CD14-positive monocyte (primary cell): ENCODE measurements at regions of chr11 and their contacts with region 1.

Region 1: GRCh38 chr11:116787786-116788486 is at the start of gene ZPR1:
- DNase-seq: peak; percentile 76 to 80 (median 79)
- H3K4me3 ChIP-seq: peak within 1 kb of the TSS; percentile 85 to 92 (median 90)
- H3K4me3 Mint-ChIP-seq: peak within 1 kb of the TSS; percentile 94 to 95
- H3K27ac ChIP-seq: peak within 1 kb of the TSS; percentile 61 to 94
- H3K27ac Mint-ChIP-seq: peak within 1 kb of the TSS; percentile 92 to 98 (median 97)
- H3K4me1 ChIP-seq: peaks cover 22 to 26% of the 10 kb centered on the region in 2 donors
- H3K4me1 Mint-ChIP-seq: peaks cover 29% of the 10 kb centered on the region
- H3K27me3 ChIP-seq: no peaks in the 10 kb centered on the region
- H3K27me3 Mint-ChIP-seq: peaks cover 6 to 14% (median 8%) of the 10 kb centered on the region in 3 donors
- CTCF ChIP-seq: no peak
- polyA plus RNA-seq, gene ZPR1: 24.4 to 35.5 (median 35.2) TPM

Region 2: GRCh38 chr11:117232092-117232878 is 444.3 kb after region 1 on chr11 and contains the start of gene RNF214:
- intact Hi-C with region 1: loop called in 1 of 2 experiments (anchors 5 kb)
- DNase-seq: peak; percentile 62 to 74 (median 71)
- H3K4me3 ChIP-seq: peak within 1 kb of the TSS; percentile 96 to 99 (median 97)
- H3K4me3 Mint-ChIP-seq: peak within 1 kb of the TSS; percentile 98 to 100
- H3K27ac ChIP-seq: peak within 1 kb of the TSS; percentile 81 to 89
- H3K27ac Mint-ChIP-seq: peak within 1 kb of the TSS; percentile 93 to 99 (median 98)
- H3K4me1 ChIP-seq: peaks cover 21 to 26% of the 10 kb centered on the region in 2 donors
- H3K4me1 Mint-ChIP-seq: peaks cover 34% of the 10 kb centered on the region
- H3K27me3 ChIP-seq: no peaks in the 10 kb centered on the region
- H3K27me3 Mint-ChIP-seq: peaks cover 0 to 2% (median 0%) of the 10 kb centered on the region in 3 donors
- CTCF ChIP-seq: peak; percentile 99
- polyA plus RNA-seq, gene RNF214: 6.4 to 13.8 (median 7.8) TPM

Region 3: DNA sequence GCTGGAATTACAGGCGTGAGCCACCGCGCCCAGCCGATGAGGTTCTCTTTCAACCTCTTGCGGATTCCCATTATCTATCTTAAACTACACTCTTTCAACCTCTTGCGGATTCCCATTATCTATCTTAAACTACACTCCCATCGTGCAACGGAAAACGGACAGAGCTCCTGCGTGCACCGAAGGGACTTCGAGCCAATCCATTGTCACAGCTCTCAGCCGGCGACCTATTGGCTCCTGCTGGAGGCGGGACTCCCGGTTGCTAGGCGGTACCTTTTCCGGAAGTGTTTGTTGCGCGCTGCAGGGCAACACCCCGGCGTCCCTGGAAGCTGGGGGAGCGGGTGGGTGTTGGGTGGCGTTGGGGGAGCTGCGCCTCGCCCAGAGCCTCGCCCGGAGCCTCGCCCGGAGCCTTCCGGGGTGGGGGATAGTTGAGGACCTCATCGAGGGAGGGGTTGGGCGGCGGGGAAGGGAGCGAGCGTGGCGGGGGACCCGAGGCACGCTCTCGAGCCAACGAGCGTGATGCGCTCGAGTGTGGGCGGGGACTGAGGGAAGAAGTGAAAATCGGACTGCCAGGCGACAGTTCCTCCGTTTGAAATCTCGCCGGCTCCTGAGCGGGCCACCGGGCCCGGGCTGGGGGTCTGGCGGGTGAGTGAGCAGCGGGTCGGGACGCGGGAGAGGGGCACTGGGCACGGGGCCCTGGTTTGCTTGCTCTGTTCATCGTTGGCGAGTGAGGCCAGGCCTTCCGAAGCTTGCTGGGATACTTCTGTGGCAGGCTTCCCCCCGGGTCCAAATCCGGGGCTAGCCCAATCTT is 539.8 kb after region 1 on chr11 and contains the start of gene CEP164:
- intact Hi-C with region 1: loop called in 1 of 2 experiments (anchors 10 kb)
- DNase-seq: peak; percentile 92 to 93 (median 92)
- H3K4me3 ChIP-seq: peak within 1 kb of the TSS; percentile 84 to 92 (median 91)
- H3K4me3 Mint-ChIP-seq: no peak within 1 kb of the TSS
- H3K27ac ChIP-seq: peak within 1 kb of the TSS; percentile 78 to 94
- H3K27ac Mint-ChIP-seq: peak within 1 kb of the TSS in 2 of 7 donors; percentile 3
- H3K4me1 ChIP-seq: peaks cover 11 to 14% of the 10 kb centered on the region in 2 donors
- H3K4me1 Mint-ChIP-seq: peaks cover 5% of the 10 kb centered on the region
- H3K27me3 ChIP-seq: no peaks in the 10 kb centered on the region
- H3K27me3 Mint-ChIP-seq: peaks cover 0 to 2% (median 0%) of the 10 kb centered on the region in 3 donors
- CTCF ChIP-seq: no peak
- polyA plus RNA-seq, gene CEP164: 4.3 to 32.1 (median 8.0) TPM